ENCODE measurements at regions of chr1 and their contacts with region 1.

Region 1: DNA sequence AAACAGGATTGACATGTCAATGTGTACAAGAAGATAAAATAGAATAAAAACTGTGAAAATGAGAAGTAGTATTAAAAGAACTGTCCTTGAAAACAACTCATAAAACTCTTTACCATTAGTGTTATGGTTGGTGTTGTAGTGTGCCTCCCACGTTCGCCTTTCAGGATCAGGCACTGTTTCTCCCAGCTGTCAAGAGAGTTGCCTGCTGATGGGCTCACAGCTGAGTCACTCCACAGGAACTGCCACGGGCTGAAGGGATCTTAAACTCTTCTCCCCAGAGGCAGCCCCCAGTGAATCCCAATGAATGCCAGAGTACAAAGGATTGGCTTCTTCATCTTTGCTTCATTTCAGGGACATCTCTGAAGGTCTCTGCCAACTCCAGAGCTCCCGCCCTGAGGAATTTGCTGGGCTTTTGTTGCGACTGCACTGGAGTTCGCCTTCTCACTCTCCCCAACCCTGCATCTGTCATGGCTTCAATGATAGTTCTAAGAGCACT is 119.6 kb downstream of the ADGRL2 start:
- DNase-seq: peak; percentile 10 to 58
- ATAC-seq: peak; percentile 58 to 68
- H3K4me3 ChIP-seq: no peak overlapping the region
- H3K27ac ChIP-seq: no peak overlapping the region
- H3K4me1 ChIP-seq: no peaks in the 10 kb centered on the region
- H3K27me3 ChIP-seq: no peaks in the 10 kb centered on the region
- CTCF ChIP-seq: no peak
- POLR2A ChIP-seq: no peak

Region 2: GRCh38 chr1:81811757-81812371 is 108.4 kb before region 1 on chr1:
- in situ Hi-C with region 1: no loop called
- intact Hi-C with region 1: loop called (anchors 10 kb)
- DNase-seq: no peak
- ATAC-seq: no peak
- H3K4me3 ChIP-seq: no peak overlapping the region
- H3K27ac ChIP-seq: no peak overlapping the region
- H3K4me1 ChIP-seq: peaks cover 11 to 12% of the 10 kb centered on the region in 2 donors
- H3K27me3 ChIP-seq: peaks cover 0 to 8% (median 0%) of the 10 kb centered on the region in 3 donors
- CTCF ChIP-seq: no peak
- POLR2A ChIP-seq: no peak

Measured in gastrocnemius medialis (tissue), 4 donors.